ENCODE measurements at regions of chr2 and their contacts with region 1.

Region 1: GRCh38 chr2:11411768-11412448 is 54.1 kb downstream of the E2F6 start:
- DNase-seq: peak in 2 of 6 donors; percentile 31 to 57
- ATAC-seq: peak; percentile 66 to 92 (median 92)
- H3K4me3 ChIP-seq: peak overlapping the region in 2 of 4 donors; percentile 17 to 39
- H3K27ac ChIP-seq: no peak overlapping the region
- H3K4me1 ChIP-seq: no peaks in the 10 kb centered on the region
- H3K27me3 ChIP-seq: no peaks in the 10 kb centered on the region
- CTCF ChIP-seq: peak in 3 of 4 donors; percentile 59 to 71 (median 67)

Region 2: GRCh38 chr2:11129598-11130449 is 282.1 kb before region 1 on chr2:
- intact Hi-C with region 1: loop called in 1 of 3 experiments (anchors 10 kb)
- DNase-seq: peak; percentile 82 to 95 (median 90)
- ATAC-seq: peak; percentile 78 to 89 (median 86)
- H3K4me3 ChIP-seq: peak overlapping the region; percentile 18 to 44 (median 32)
- H3K27ac ChIP-seq: peak overlapping the region; percentile 11 to 68 (median 42)
- H3K4me1 ChIP-seq: peaks cover 5 to 7% (median 6%) of the 10 kb centered on the region in 3 donors
- H3K27me3 ChIP-seq: no peaks in the 10 kb centered on the region
- CTCF ChIP-seq: peak in 3 of 4 donors; percentile 12 to 40 (median 30)

Region 3: DNA sequence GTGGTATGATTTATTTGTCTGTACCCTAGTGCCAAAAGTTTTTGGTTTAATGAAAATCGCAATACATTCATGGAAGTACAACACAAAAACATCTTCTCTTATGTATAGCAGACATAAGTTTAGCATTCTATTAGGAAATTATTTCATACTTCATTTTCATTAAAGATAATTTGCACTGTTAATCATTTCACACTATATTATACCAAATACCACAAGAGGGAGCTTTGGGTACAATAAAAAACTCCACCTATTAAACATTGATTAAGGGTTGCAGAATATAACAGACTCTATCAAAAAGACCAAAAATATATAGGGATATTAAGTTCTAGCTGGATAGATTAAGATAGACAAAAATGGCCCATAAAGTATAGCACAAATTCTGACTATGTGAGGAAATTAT is 177.6 kb before region 1 on chr2:
- intact Hi-C with region 1: loop called in 2 of 3 experiments (anchors 5 kb)
- DNase-seq: no peak
- ATAC-seq: peak in 3 of 4 donors; percentile 70 to 80 (median 74)
- H3K4me3 ChIP-seq: no peak overlapping the region
- H3K27ac ChIP-seq: no peak overlapping the region
- H3K4me1 ChIP-seq: no peaks in the 10 kb centered on the region
- H3K27me3 ChIP-seq: no peaks in the 10 kb centered on the region
- CTCF ChIP-seq: peak in 3 of 4 donors; percentile 13 to 33 (median 32)

Region 4: GRCh38 chr2:11239666-11240462 is 172.0 kb before region 1 on chr2:
- intact Hi-C with region 1: loop called in 1 of 3 experiments (anchors 5 kb)
- DNase-seq: no peak
- ATAC-seq: no peak
- H3K4me3 ChIP-seq: no peak overlapping the region
- H3K27ac ChIP-seq: no peak overlapping the region
- H3K4me1 ChIP-seq: peaks cover 0 to 11% (median 0%) of the 10 kb centered on the region in 3 donors
- H3K27me3 ChIP-seq: no peaks in the 10 kb centered on the region
- CTCF ChIP-seq: no peak

Measured in pancreas (tissue), 10 donors.